Activated B cell treated with CpG ODN at 0.5 μM for 24 hours (primary cell): ENCODE measurements at regions of chr19 and their contacts with region 1.

Region 1: GRCh38 chr19:41934849-41935374 is 6.7 kb upstream of the ERFL start:
- DNase-seq: peak; percentile 65
- ATAC-seq: peak; percentile 84
- H3K4me3 Mint-ChIP-seq: no peak overlapping the region
- H3K27ac Mint-ChIP-seq: peak overlapping the region; percentile 79
- H3K4me1 Mint-ChIP-seq: peaks cover 63% of the 10 kb centered on the region
- H3K27me3 Mint-ChIP-seq: no peaks in the 10 kb centered on the region
- CTCF ChIP-seq: no peak

Region 2: GRCh38 chr19:41951686-41952172 is 16.8 kb after region 1 on chr19:
- CTCF ChIA-PET with region 1: interaction called, 3 read pairs
- POLR2A ChIA-PET with region 1: no interaction called
- intact Hi-C with region 1: loop called (anchors 1 kb)
- DNase-seq: peak; percentile 86
- ATAC-seq: peak; percentile 99
- H3K4me3 Mint-ChIP-seq: no peak overlapping the region
- H3K27ac Mint-ChIP-seq: peak overlapping the region; percentile 41
- H3K4me1 Mint-ChIP-seq: peaks cover 29% of the 10 kb centered on the region
- H3K27me3 Mint-ChIP-seq: no peaks in the 10 kb centered on the region
- CTCF ChIP-seq: peak; percentile 92